Esophagus squamous epithelium (tissue), 5 donors: ENCODE measurements at regions of chr9 and their contacts with region 1.

Region 1: GRCh38 chr9:37916051-37916985 is 12.4 kb upstream of the SLC25A51 start:
- DNase-seq: no peak
- H3K4me3 ChIP-seq: no peak overlapping the region
- H3K27ac ChIP-seq: peak overlapping the region in 3 of 4 donors; percentile 36 to 76 (median 38)
- H3K4me1 ChIP-seq: peaks cover 0 to 69% (median 15%) of the 10 kb centered on the region in 3 donors
- H3K27me3 ChIP-seq: no peaks in the 10 kb centered on the region
- CTCF ChIP-seq: no peak
- POLR2A ChIP-seq: no peak

Region 2: DNA sequence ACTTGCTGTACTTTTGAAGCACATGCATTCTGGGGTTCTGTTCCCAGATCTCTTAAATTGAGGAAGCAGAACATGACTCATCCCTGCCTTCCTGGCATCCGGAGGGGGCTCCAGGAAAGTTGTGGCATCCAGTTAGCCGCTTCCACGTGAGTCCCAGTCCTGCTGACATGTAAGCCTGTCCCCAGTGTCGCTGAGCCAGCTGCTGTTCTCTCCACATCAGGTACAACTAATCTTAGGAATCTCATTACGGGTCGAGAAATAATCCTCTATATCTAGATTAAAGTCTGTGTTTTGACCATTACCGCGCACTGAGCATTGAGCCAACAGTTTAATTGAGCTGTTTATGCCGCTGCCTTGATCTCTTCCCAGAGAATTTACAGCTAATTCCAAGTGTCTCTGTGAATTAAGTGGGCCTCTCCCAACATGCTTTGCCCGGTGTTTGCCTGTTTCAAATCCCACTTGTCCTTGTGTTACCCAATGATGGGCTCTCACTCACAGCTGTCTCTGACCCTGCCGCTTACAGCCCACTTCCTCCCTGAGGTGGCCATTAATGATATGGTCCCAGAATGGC is 163.2 kb after region 1 on chr9:
- intact Hi-C with region 1: loop called (anchors 5 kb)
- DNase-seq: no peak
- H3K4me3 ChIP-seq: no peak overlapping the region
- H3K27ac ChIP-seq: peak overlapping the region in 2 of 4 donors; percentile 51 to 70
- H3K4me1 ChIP-seq: peaks cover 0 to 15% (median 5%) of the 10 kb centered on the region in 3 donors
- H3K27me3 ChIP-seq: no peaks in the 10 kb centered on the region
- CTCF ChIP-seq: no peak
- POLR2A ChIP-seq: no peak